ENCODE measurements at regions of chr2 and their contacts with region 1.

Region 1: DNA sequence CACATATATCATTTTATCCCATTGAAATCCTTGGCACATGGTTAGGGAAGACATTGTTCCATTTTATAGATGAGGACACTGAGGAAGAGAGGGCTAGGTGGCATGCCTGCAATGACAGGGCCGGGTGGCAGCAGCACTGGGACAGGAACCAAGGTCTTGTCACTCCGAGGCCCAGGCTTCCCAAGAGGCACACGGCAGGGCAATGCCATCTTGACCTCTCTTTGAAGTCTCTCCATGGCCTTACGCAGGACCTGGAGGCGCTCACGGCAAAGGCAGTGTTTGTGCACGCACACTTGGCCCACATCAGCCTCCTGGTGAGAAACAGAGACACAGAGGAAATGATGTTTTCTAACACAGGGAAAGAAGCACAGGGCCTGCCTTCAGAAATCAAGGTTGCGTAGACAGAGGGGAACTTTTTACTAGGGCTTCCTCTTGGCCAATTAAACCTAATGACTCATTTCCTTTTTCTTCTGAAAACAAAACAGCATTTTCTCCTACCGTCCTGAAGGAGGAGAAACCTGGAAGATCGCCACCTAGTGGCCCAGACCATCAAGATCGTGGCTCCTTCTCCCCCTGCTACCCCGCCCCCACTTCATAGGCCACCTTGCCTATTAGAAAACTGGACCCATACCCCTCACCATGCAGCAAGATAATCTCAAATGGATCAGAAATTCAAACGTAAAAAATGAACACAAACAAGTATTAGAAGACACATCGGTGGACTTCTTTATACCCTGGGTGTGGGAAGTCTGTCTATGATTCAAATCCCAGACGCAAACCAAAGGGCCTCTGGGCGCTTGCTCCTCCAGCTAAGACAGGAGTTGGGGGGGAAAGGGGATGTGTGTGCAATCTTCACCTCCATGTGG is 74.6 kb upstream of the SP3 start:
- DNase-seq: peak in 9 of 10 donors; percentile 62 to 92 (median 74)

Region 2: DNA sequence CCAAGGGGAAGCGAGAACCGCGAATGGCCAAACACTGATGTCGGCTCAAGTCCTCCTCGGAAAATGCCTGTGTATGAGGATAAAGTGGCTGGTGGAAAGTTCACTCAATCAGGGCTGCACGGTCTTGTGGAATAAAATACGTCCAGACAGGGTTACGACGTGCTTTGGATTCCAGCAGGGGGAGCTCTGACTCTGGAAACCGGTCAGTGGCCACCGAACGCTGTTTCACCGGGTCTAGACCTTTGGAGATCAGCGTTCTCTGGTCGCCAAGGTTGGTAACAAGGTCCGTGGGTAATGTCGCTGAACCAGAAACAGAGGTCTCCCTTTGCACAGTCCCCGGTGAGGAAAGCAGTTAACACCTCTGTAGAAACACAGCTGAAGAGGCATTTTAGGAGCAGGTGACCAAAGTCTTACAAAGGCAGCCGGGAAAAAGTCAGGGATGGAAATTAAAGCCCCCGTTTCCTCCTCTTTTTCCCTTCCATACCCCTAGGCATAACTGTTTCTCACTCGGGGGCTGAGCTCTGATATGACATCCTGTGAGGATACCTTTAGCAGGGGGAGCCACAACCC is 637.3 kb before region 1 on chr2:
- intact Hi-C with region 1: loop called (anchors 2 kb)
- DNase-seq: peak; percentile 43 to 96 (median 76)

Region 3: DNA sequence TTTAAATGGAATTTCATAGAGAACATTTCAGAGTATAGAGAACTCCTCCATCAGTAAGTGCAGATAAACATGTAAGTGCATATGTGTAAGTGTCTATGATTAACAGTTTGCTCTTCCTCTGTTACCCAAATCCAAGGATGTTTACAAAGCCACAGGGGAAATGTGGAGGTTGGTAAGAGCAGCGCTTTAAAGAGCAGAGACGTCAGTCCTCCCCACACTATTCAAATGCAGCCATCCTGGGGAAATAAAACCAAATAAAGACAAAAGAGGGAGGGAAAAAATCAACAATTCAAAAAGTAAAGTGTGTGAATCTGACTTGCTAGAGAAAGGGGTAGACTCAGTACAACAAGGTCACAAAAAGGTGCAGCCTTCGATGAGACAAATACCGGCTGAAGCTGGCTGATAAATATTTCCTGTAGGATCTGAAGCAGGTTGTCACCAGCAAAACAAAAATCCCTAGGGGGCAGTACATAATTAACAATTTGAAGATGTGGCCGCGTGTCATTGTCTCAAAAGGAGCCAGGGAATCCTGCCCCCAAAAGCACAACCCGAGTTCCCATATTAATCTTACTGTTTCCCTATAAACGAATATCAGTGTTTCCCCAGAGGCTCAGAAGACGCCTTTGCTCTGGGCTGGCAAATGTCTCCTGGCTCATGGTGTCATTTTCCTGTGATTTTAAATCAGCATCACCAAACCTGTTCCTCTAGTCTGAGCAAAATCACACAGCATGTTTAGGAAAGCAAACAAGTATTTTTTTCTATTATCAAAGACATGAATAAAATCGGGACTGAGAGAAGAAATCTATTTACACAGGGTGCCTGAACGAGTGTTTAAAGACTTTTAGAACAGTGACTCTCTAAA is 468.5 kb before region 1 on chr2:
- intact Hi-C with region 1: loop called (anchors 5 kb)
- DNase-seq: peak in 2 of 10 donors; percentile 6 to 8

Region 4: GRCh38 chr2:174450021-174450816 is 410.4 kb after region 1 on chr2:
- intact Hi-C with region 1: no loop called
- DNase-seq: no peak